OCI-LY7 (cell line): ENCODE measurements at regions of chr17 and their contacts with region 1.

Region 1: GRCh38 chr17:64073771-64074703 is 53.6 kb upstream of the ICAM2 start:
- DNase-seq: peak; percentile 95
- H3K4me3 ChIP-seq: peak overlapping the region; percentile 40
- H3K27ac ChIP-seq: peak overlapping the region; percentile 93
- H3K4me1 ChIP-seq: peaks cover 69% of the 10 kb centered on the region
- CTCF ChIP-seq: no peak

Region 2: GRCh38 chr17:64020056-64020766 is 53.8 kb before region 1 on chr17 and contains the start of gene ICAM2:
- CTCF ChIA-PET with region 1: interaction called, 3 read pairs
- POLR2A ChIA-PET with region 1: interaction called, 23 read pairs
- intact Hi-C with region 1: loop called (anchors 1 kb)
- DNase-seq: peak; percentile 91
- H3K4me3 ChIP-seq: peak within 1 kb of the TSS; percentile 79
- H3K27ac ChIP-seq: peak within 1 kb of the TSS; percentile 97
- H3K4me1 ChIP-seq: peaks cover 67% of the 10 kb centered on the region
- CTCF ChIP-seq: no peak
- total RNA-seq, gene ICAM2: 76.4 and 112 TPM in 2 replicates

Region 3: GRCh38 chr17:64063766-64064224 is 10.2 kb before region 1 on chr17:
- CTCF ChIA-PET with region 1: interaction called, 12 read pairs
- POLR2A ChIA-PET with region 1: interaction called, 17 read pairs
- intact Hi-C with region 1: loop called (anchors 1 kb)
- DNase-seq: peak; percentile 71
- H3K4me3 ChIP-seq: no peak overlapping the region
- H3K27ac ChIP-seq: peak overlapping the region; percentile 36
- H3K4me1 ChIP-seq: peaks cover 57% of the 10 kb centered on the region
- CTCF ChIP-seq: peak; percentile 85

Region 4: GRCh38 chr17:64103391-64104364 is 29.6 kb after region 1 on chr17:
- CTCF ChIA-PET with region 1: interaction called, 4 read pairs
- POLR2A ChIA-PET with region 1: interaction called, 42 read pairs
- intact Hi-C with region 1: loop called (anchors 1 kb)
- DNase-seq: peak; percentile 63
- H3K4me3 ChIP-seq: peak overlapping the region; percentile 28
- H3K27ac ChIP-seq: peak overlapping the region; percentile 83
- H3K4me1 ChIP-seq: peaks cover 72% of the 10 kb centered on the region
- CTCF ChIP-seq: no peak

Region 5: DNA sequence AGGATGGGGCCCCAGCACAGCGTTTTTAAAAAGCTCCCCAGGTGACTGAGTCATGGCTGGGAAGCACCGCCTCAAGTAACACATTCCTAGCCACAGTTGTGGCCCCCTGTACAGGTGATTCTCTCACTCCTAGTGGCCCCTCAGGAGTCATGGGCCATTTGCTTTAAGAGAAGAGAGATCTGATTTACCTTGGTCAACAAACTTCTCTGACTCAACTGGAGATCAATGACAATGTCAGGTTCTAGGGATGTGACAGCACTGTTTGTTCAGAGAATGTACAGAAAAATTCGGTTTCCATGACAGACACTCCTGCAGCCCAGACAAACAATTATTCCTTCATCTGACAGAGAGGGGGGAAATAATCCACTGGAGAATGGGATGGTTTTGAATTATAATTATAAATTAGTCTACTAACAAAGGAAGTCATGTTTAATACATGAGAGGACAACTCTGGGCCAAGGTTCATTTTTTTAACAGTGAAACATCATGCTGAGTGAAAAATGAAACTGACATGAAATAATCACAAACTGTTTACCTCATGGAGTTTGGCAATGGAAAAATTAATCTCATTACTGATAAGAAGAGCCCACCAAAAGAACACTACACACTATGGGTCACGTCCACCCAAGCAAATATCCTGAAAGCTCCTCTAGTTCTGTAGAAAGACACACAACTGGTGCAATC is 46.2 kb after region 1 on chr17:
- CTCF ChIA-PET with region 1: no interaction called
- POLR2A ChIA-PET with region 1: interaction called, 9 read pairs
- intact Hi-C with region 1: loop called (anchors 2 kb)
- DNase-seq: no peak
- H3K4me3 ChIP-seq: peak overlapping the region; percentile 20
- H3K27ac ChIP-seq: peak overlapping the region; percentile 51
- H3K4me1 ChIP-seq: peaks cover 30% of the 10 kb centered on the region
- CTCF ChIP-seq: no peak